B cell (primary cell): ENCODE measurements at regions of chr1 and their contacts with region 1.

Region 1: GRCh38 chr1:178300352-178300699 is 196.4 kb downstream of the CLEC20A start:
- DNase-seq: no peak
- ATAC-seq: no peak
- H3K4me3 ChIP-seq: no peak overlapping the region
- H3K4me3 Mint-ChIP-seq: no peak overlapping the region
- H3K27ac ChIP-seq: no peak overlapping the region
- H3K27ac Mint-ChIP-seq: no peak overlapping the region
- H3K4me1 ChIP-seq: no peaks in the 10 kb centered on the region
- H3K4me1 Mint-ChIP-seq: no peaks in the 10 kb centered on the region
- H3K27me3 ChIP-seq: no peaks in the 10 kb centered on the region
- H3K27me3 Mint-ChIP-seq: peaks cover 15% of the 10 kb centered on the region
- CTCF ChIP-seq: no peak

Region 2: GRCh38 chr1:178119626-178120025 is 180.7 kb before region 1 on chr1:
- CTCF ChIA-PET with region 1: no interaction called
- POLR2A ChIA-PET with region 1: no interaction called
- intact Hi-C with region 1: no loop called
- DNase-seq: no peak
- ATAC-seq: no peak
- H3K4me3 ChIP-seq: no peak overlapping the region
- H3K4me3 Mint-ChIP-seq: no peak overlapping the region
- H3K27ac ChIP-seq: no peak overlapping the region
- H3K27ac Mint-ChIP-seq: no peak overlapping the region
- H3K4me1 ChIP-seq: no peaks in the 10 kb centered on the region
- H3K4me1 Mint-ChIP-seq: no peaks in the 10 kb centered on the region
- H3K27me3 ChIP-seq: peaks cover 0 to 2% (median 0%) of the 10 kb centered on the region in 4 experiments
- H3K27me3 Mint-ChIP-seq: peaks cover 38% of the 10 kb centered on the region
- CTCF ChIP-seq: no peak

Region 3: GRCh38 chr1:178220094-178220493 is 80.2 kb before region 1 on chr1:
- CTCF ChIA-PET with region 1: no interaction called
- POLR2A ChIA-PET with region 1: no interaction called
- intact Hi-C with region 1: no loop called
- DNase-seq: no peak
- ATAC-seq: no peak
- H3K4me3 ChIP-seq: no peak overlapping the region
- H3K4me3 Mint-ChIP-seq: no peak overlapping the region
- H3K27ac ChIP-seq: no peak overlapping the region
- H3K27ac Mint-ChIP-seq: no peak overlapping the region
- H3K4me1 ChIP-seq: no peaks in the 10 kb centered on the region
- H3K4me1 Mint-ChIP-seq: no peaks in the 10 kb centered on the region
- H3K27me3 ChIP-seq: no peaks in the 10 kb centered on the region
- H3K27me3 Mint-ChIP-seq: peaks cover 5% of the 10 kb centered on the region
- CTCF ChIP-seq: no peak

Region 4: GRCh38 chr1:178310685-178311105 is 10.4 kb after region 1 on chr1:
- CTCF ChIA-PET with region 1: interaction called, 51 read pairs
- POLR2A ChIA-PET with region 1: no interaction called
- intact Hi-C with region 1: loop called (anchors 1 kb)
- DNase-seq: peak; percentile 70
- ATAC-seq: peak; percentile 45
- H3K4me3 ChIP-seq: no peak overlapping the region
- H3K4me3 Mint-ChIP-seq: no peak overlapping the region
- H3K27ac ChIP-seq: no peak overlapping the region
- H3K27ac Mint-ChIP-seq: no peak overlapping the region
- H3K4me1 ChIP-seq: no peaks in the 10 kb centered on the region
- H3K4me1 Mint-ChIP-seq: no peaks in the 10 kb centered on the region
- H3K27me3 ChIP-seq: peaks cover 0 to 3% (median 0%) of the 10 kb centered on the region in 4 experiments
- H3K27me3 Mint-ChIP-seq: peaks cover 10% of the 10 kb centered on the region
- CTCF ChIP-seq: peak; percentile 82

Region 5: GRCh38 chr1:178324003-178324402 is 23.7 kb after region 1 on chr1:
- CTCF ChIA-PET with region 1: interaction called, 10 read pairs
- POLR2A ChIA-PET with region 1: no interaction called
- intact Hi-C with region 1: no loop called
- DNase-seq: no peak
- ATAC-seq: no peak
- H3K4me3 ChIP-seq: no peak overlapping the region
- H3K4me3 Mint-ChIP-seq: no peak overlapping the region
- H3K27ac ChIP-seq: no peak overlapping the region
- H3K27ac Mint-ChIP-seq: no peak overlapping the region
- H3K4me1 ChIP-seq: peaks cover 0 to 3% of the 10 kb centered on the region in 2 donors
- H3K4me1 Mint-ChIP-seq: peaks cover 3% of the 10 kb centered on the region
- H3K27me3 ChIP-seq: peaks cover 0 to 3% (median 0%) of the 10 kb centered on the region in 4 experiments
- H3K27me3 Mint-ChIP-seq: peaks cover 21% of the 10 kb centered on the region
- CTCF ChIP-seq: no peak

Region 6: DNA sequence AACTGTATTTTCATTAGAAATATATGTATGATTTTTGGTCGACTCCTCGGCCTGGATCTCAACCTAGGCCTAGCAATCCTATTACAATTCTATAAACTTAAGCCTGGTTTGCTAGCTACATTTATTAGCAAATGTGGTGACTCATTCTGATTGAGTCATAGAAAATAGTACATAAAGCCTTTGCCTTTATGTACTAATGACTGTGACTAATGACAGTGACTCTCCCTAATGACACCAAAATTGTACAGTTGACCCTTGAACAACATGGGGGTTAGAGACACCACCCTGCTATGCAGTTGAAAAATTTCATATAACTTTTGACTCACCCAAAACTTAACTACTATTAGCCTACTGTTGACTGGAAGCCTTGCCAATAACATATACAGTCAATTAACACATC is 117.5 kb after region 1 on chr1:
- CTCF ChIA-PET with region 1: no interaction called
- POLR2A ChIA-PET with region 1: no interaction called
- intact Hi-C with region 1: no loop called
- DNase-seq: no peak
- ATAC-seq: no peak
- H3K4me3 ChIP-seq: no peak overlapping the region
- H3K4me3 Mint-ChIP-seq: no peak overlapping the region
- H3K27ac ChIP-seq: no peak overlapping the region
- H3K27ac Mint-ChIP-seq: no peak overlapping the region
- H3K4me1 ChIP-seq: peaks cover 5 to 18% of the 10 kb centered on the region in 2 donors
- H3K4me1 Mint-ChIP-seq: peaks cover 13% of the 10 kb centered on the region
- H3K27me3 ChIP-seq: no peaks in the 10 kb centered on the region
- H3K27me3 Mint-ChIP-seq: no peaks in the 10 kb centered on the region
- CTCF ChIP-seq: no peak

Region 7: DNA sequence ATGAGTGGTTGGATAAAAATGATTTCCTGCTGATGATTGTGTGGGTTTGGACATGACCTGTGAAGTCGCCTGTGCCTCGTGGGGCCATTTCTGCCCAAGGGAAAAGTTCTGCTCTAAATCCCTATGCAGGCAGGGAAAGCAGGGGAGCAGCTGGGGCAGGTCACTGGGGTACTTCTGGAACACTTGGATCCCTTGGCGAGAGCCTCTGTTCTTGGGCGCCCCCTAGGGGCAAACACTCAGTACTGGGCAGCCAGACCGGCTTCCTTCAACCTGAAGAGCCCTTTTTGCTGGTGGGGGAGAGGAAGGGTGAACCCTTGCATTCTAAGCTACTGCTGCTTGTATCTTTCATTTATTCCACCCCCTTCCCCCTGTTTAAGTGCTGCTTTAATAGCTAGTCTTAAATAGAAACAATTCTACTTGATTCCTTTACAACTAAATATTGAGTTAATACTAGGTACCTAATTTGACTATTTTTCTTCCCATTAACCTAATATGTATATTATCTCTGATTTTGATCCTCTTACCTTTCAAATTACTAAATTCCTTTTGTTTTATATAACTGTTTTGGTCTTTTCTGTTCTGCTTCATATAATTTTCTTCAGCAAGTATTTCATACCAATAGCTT is 201.5 kb after region 1 on chr1:
- CTCF ChIA-PET with region 1: interaction called, 27 read pairs
- POLR2A ChIA-PET with region 1: no interaction called
- intact Hi-C with region 1: no loop called
- DNase-seq: peak; percentile 69
- ATAC-seq: peak; percentile 69
- H3K4me3 ChIP-seq: no peak overlapping the region
- H3K4me3 Mint-ChIP-seq: no peak overlapping the region
- H3K27ac ChIP-seq: no peak overlapping the region
- H3K27ac Mint-ChIP-seq: no peak overlapping the region
- H3K4me1 ChIP-seq: no peaks in the 10 kb centered on the region
- H3K4me1 Mint-ChIP-seq: no peaks in the 10 kb centered on the region
- H3K27me3 ChIP-seq: peaks cover 0 to 7% (median 3%) of the 10 kb centered on the region in 4 experiments
- H3K27me3 Mint-ChIP-seq: peaks cover 8% of the 10 kb centered on the region
- CTCF ChIP-seq: peak; percentile 77

Region 8: GRCh38 chr1:178532392-178532791 is 232.1 kb after region 1 on chr1:
- CTCF ChIA-PET with region 1: interaction called, 10 read pairs
- POLR2A ChIA-PET with region 1: no interaction called
- intact Hi-C with region 1: no loop called
- DNase-seq: peak; percentile 87
- ATAC-seq: peak; percentile 90
- H3K4me3 ChIP-seq: no peak overlapping the region
- H3K4me3 Mint-ChIP-seq: no peak overlapping the region
- H3K27ac ChIP-seq: no peak overlapping the region
- H3K27ac Mint-ChIP-seq: no peak overlapping the region
- H3K4me1 ChIP-seq: peaks cover 0 to 9% of the 10 kb centered on the region in 2 donors
- H3K4me1 Mint-ChIP-seq: peaks cover 4% of the 10 kb centered on the region
- H3K27me3 ChIP-seq: no peaks in the 10 kb centered on the region
- H3K27me3 Mint-ChIP-seq: no peaks in the 10 kb centered on the region
- CTCF ChIP-seq: peak; percentile 98